ENCODE measurements at regions of chr2 and their contacts with region 1.

Region 1: GRCh38 chr2:238970553-238971081 is 122.7 kb downstream of the TWIST2 start:
- DNase-seq: no peak
- H3K4me3 ChIP-seq: no peak overlapping the region
- H3K27ac ChIP-seq: no peak overlapping the region
- H3K4me1 ChIP-seq: no peaks in the 10 kb centered on the region
- H3K27me3 ChIP-seq: no peaks in the 10 kb centered on the region
- CTCF ChIP-seq: peak; percentile 91 to 95 (median 93)
- POLR2A ChIP-seq: no peak

Region 2: GRCh38 chr2:237547841-237548416 is 1422.7 kb before region 1 on chr2:
- intact Hi-C with region 1: no loop called
- DNase-seq: no peak
- H3K4me3 ChIP-seq: no peak overlapping the region
- H3K27ac ChIP-seq: peak overlapping the region in 1 of 2 donors; percentile 3
- H3K4me1 ChIP-seq: no peaks in the 10 kb centered on the region
- H3K27me3 ChIP-seq: no peaks in the 10 kb centered on the region
- CTCF ChIP-seq: no peak
- POLR2A ChIP-seq: no peak

Region 3: GRCh38 chr2:238644095-238645081 is 326.2 kb before region 1 on chr2:
- intact Hi-C with region 1: loop called (anchors 5 kb)
- DNase-seq: peak in 1 of 2 donors; percentile 18
- H3K4me3 ChIP-seq: no peak overlapping the region
- H3K27ac ChIP-seq: peak overlapping the region; percentile 77 to 89
- H3K4me1 ChIP-seq: no peaks in the 10 kb centered on the region
- H3K27me3 ChIP-seq: no peaks in the 10 kb centered on the region
- CTCF ChIP-seq: no peak
- POLR2A ChIP-seq: no peak